HEK293T (cell line): ENCODE measurements at regions of chr7 and their contacts with region 1.

Region 1: DNA sequence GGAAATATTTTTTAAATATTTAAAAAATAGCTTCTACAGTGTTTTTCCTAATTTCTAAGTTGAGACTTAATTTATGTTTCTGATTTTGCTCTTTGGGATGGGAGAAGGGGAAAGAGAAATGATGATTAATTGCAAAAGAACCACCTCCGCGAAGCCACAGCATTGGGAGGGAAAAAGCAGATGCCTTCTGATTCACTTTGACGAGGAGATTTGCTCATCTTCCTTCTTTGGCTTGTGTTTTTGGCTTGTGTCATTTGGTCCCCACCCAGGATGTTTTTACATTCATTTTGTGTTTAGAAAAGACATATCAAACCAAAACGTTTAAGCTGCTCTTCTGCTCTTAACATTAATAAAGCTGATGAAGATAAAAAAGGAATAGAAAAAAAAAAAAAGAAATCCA is 121.7 kb downstream of the MACC1 start:
- DNase-seq: no peak

Region 2: GRCh38 chr7:19919261-19920095 is 176.0 kb before region 1 on chr7:
- CTCF ChIA-PET with region 1: interaction called, 10 read pairs
- POLR2A ChIA-PET with region 1: no interaction called
- DNase-seq: no peak